Colonic mucosa (tissue), 4 donors: ENCODE measurements at regions of chr10 and their contacts with region 1.

Region 1: DNA sequence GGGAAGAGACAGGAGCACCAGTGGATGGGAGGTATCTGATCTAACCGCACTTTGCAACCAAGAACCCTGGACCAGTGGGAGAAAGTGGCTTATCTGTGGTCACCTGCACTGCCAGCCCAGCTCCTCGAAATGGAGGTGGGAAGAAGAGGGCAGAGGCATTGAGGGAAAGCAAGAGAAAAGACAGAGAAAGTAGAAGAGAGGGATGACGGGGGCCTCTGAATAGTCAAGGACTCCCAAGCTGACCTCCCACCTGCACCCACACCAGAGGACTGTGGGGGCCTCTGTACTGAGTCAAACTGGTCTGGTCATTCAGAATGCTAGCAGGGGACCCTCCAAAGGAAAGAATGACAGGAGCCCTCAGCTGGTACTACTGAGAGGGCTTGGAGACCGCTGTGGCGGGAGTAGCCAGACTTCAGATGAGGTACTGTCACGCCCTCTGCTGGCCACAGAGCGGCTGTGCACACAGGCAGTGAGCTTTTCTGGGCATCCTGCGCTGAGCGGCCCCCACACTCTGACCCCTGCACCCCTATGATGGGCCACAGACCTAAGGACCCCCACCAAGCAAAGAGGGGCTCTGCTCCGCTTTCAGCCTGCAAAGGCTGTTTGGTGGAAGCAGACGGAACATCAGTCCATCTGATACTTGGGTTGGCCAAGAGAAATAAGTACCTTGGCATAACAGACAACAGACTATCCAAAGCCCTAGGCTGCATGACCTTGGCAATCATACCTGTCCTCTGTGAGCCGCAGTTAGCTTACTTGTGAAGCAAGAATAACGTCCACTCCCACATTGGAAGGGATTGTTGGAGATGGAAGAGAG is 112.9 kb downstream of the COL13A1 start:
- DNase-seq: peak; percentile 77
- H3K4me3 ChIP-seq: no peak overlapping the region
- H3K27ac ChIP-seq: no peak overlapping the region
- H3K4me1 ChIP-seq: peaks cover 14% of the 10 kb centered on the region
- H3K27me3 ChIP-seq: no peaks in the 10 kb centered on the region
- CTCF ChIP-seq: peak; percentile 93

Region 2: DNA sequence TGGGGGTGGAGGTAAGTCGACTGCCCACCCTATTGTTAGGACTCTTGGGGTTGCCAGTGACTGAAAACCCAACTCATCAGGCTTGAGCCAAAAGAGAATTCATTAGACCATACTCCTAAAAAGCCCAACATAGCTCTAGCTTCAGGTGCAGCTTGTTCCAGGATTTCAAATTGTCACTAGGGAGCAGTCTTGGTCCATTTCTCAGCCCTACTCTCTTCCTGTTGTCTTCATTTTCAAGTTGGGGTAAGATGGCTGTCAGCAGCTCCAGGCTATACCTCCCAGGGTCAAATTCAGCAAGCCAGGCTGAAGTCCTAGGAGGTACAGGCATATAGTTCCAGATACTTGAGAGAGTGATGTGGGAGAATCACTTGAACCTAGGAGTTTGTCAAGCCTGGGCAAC is 127.8 kb before region 1 on chr10:
- intact Hi-C with region 1: loop called (anchors 5 kb)
- DNase-seq: no peak
- H3K4me3 ChIP-seq: no peak overlapping the region
- H3K27ac ChIP-seq: no peak overlapping the region
- H3K4me1 ChIP-seq: no peaks in the 10 kb centered on the region
- H3K27me3 ChIP-seq: no peaks in the 10 kb centered on the region
- CTCF ChIP-seq: no peak

Region 3: GRCh38 chr10:69883310-69884023 is 31.1 kb before region 1 on chr10:
- intact Hi-C with region 1: loop called (anchors 1 kb)
- DNase-seq: peak; percentile 58
- H3K4me3 ChIP-seq: no peak overlapping the region
- H3K27ac ChIP-seq: no peak overlapping the region
- H3K4me1 ChIP-seq: no peaks in the 10 kb centered on the region
- H3K27me3 ChIP-seq: no peaks in the 10 kb centered on the region
- CTCF ChIP-seq: peak; percentile 44

Region 4: GRCh38 chr10:70074165-70074564 is 159.6 kb after region 1 on chr10:
- intact Hi-C with region 1: no loop called
- DNase-seq: no peak
- H3K4me3 ChIP-seq: no peak overlapping the region
- H3K27ac ChIP-seq: no peak overlapping the region
- H3K4me1 ChIP-seq: no peaks in the 10 kb centered on the region
- H3K27me3 ChIP-seq: no peaks in the 10 kb centered on the region
- CTCF ChIP-seq: no peak